ENCODE measurements at regions of chr1 and their contacts with region 1.

Region 1: GRCh38 chr1:23916209-23917131 is 3.3 kb upstream of the CNR2 start:
- DNase-seq: peak; percentile 86
- ATAC-seq: peak; percentile 53
- H3K4me3 ChIP-seq: peak overlapping the region in 2 of 5 experiments; percentile 22 to 50
- H3K4me3 Mint-ChIP-seq: peak overlapping the region; percentile 47
- H3K27ac ChIP-seq: peak overlapping the region; percentile 48 to 77
- H3K27ac Mint-ChIP-seq: peak overlapping the region; percentile 90
- H3K4me1 ChIP-seq: peaks cover 52 to 72% of the 10 kb centered on the region in 2 donors
- H3K4me1 Mint-ChIP-seq: peaks cover 64% of the 10 kb centered on the region
- H3K27me3 ChIP-seq: no peaks in the 10 kb centered on the region
- H3K27me3 Mint-ChIP-seq: no peaks in the 10 kb centered on the region
- CTCF ChIP-seq: peak; percentile 80

Region 2: GRCh38 chr1:23559136-23559984 is 357.1 kb before region 1 on chr1 and contains the start of gene ID3:
- CTCF ChIA-PET with region 1: interaction called, 3 read pairs
- POLR2A ChIA-PET with region 1: no interaction called
- intact Hi-C with region 1: loop called (anchors 5 kb)
- DNase-seq: peak; percentile 97
- ATAC-seq: peak; percentile 73
- H3K4me3 ChIP-seq: peak within 1 kb of the TSS; percentile 87 to 100 (median 95)
- H3K4me3 Mint-ChIP-seq: peak within 1 kb of the TSS; percentile 93
- H3K27ac ChIP-seq: peak within 1 kb of the TSS; percentile 83 to 91
- H3K27ac Mint-ChIP-seq: peak within 1 kb of the TSS; percentile 94
- H3K4me1 ChIP-seq: peaks cover 66 to 75% of the 10 kb centered on the region in 2 donors
- H3K4me1 Mint-ChIP-seq: peaks cover 72% of the 10 kb centered on the region
- H3K27me3 ChIP-seq: no peaks in the 10 kb centered on the region
- H3K27me3 Mint-ChIP-seq: no peaks in the 10 kb centered on the region
- CTCF ChIP-seq: no peak
- total RNA-seq, gene ID3: 367 and 370 TPM in 2 replicates

Region 3: DNA sequence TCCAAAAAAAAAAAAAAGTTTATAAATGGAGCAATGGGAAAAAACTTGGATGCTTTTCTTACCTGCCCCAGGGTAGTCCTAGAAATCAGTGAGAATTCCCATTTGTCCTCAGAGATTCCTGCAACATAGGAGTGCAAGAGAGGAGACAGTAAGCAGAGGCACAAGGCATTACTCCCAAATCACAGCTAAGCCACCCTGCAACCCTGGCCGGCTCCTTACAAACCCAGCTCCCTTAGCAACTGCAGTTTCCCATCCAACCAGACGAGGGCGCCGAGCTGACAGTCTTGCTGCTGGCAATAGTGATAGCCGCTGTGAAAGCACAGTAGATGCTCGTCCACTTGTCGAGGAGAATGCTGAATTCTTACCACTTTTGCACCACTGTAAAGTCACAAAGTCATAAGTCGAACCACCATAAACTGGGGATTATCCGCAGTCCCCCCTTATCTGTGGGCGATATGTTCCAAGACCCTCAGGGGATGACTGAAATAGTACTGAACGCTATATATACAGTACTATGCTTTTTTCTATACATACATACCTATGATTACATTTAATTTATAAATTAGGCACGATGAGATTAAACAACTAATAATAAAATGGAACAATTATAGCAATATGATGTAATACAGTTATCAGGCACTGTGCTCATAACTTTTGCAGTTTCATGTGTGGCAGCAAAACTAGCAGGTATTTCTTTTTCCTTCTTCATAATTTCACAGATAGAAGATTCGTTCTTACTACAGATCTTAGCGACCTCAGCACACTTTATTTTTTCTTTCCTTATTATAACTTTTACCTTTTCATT is 144.2 kb before region 1 on chr1:
- CTCF ChIA-PET with region 1: interaction called, 79 read pairs
- POLR2A ChIA-PET with region 1: interaction called, 6 read pairs
- intact Hi-C with region 1: loop called (anchors 1 kb)
- DNase-seq: peak; percentile 86
- ATAC-seq: peak; percentile 100
- H3K4me3 ChIP-seq: no peak overlapping the region
- H3K4me3 Mint-ChIP-seq: no peak overlapping the region
- H3K27ac ChIP-seq: no peak overlapping the region
- H3K27ac Mint-ChIP-seq: no peak overlapping the region
- H3K4me1 ChIP-seq: peaks cover 4 to 5% of the 10 kb centered on the region in 2 donors
- H3K4me1 Mint-ChIP-seq: peaks cover 9% of the 10 kb centered on the region
- H3K27me3 ChIP-seq: no peaks in the 10 kb centered on the region
- H3K27me3 Mint-ChIP-seq: no peaks in the 10 kb centered on the region
- CTCF ChIP-seq: peak; percentile 92

Region 4: DNA sequence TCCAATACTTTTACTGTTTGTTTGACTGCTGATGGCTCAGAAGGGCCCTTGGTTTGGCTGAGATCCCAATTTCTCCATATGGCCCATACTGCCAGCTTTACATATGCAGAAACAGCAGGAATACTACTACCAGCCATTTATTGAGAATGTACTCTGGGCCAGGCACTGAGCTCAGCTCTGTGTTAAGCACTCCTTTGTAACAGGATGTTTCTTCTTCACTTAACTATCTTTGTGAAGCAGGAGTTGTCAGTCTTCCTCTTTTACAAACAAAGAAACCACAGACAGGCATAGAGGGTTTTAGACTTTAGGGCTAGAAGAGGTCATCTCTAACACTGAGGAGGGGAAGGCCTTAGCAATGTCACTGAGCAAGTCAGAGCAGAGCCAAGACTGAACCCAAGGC is 99.6 kb before region 1 on chr1:
- CTCF ChIA-PET with region 1: interaction called, 199 read pairs
- POLR2A ChIA-PET with region 1: interaction called, 9 read pairs
- intact Hi-C with region 1: no loop called
- DNase-seq: no peak
- ATAC-seq: no peak
- H3K4me3 ChIP-seq: no peak overlapping the region
- H3K4me3 Mint-ChIP-seq: no peak overlapping the region
- H3K27ac ChIP-seq: no peak overlapping the region
- H3K27ac Mint-ChIP-seq: no peak overlapping the region
- H3K4me1 ChIP-seq: no peaks in the 10 kb centered on the region
- H3K4me1 Mint-ChIP-seq: peaks cover 2% of the 10 kb centered on the region
- H3K27me3 ChIP-seq: no peaks in the 10 kb centered on the region
- H3K27me3 Mint-ChIP-seq: no peaks in the 10 kb centered on the region
- CTCF ChIP-seq: no peak

Region 5: DNA sequence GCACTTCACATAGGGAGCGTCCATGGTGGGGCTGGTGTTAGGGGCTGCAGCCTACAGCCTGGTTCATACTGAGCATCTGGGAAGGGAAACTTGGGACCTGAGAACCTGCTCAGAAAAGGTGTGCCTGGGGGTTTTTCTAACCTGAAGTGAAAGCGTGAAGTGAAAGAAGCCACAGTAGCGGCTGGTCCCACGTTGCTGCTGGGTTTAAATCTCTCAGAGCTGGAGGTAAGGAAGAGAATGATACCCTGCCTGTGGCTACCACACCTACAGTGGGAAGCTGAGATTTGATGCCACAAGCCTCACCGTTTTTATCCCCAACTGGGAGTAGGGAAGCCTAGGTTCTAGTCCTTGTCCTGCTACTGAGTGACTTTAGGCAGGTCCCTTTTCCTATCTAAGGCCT is 27.4 kb before region 1 on chr1:
- CTCF ChIA-PET with region 1: interaction called, 22 read pairs
- POLR2A ChIA-PET with region 1: interaction called, 81 read pairs
- intact Hi-C with region 1: no loop called
- DNase-seq: peak; percentile 78
- ATAC-seq: peak; percentile 62
- H3K4me3 ChIP-seq: peak overlapping the region in 1 of 5 experiments; percentile 60
- H3K4me3 Mint-ChIP-seq: peak overlapping the region; percentile 81
- H3K27ac ChIP-seq: peak overlapping the region; percentile 70 to 82
- H3K27ac Mint-ChIP-seq: peak overlapping the region; percentile 88
- H3K4me1 ChIP-seq: peaks cover 68 to 74% of the 10 kb centered on the region in 2 donors
- H3K4me1 Mint-ChIP-seq: peaks cover 72% of the 10 kb centered on the region
- H3K27me3 ChIP-seq: no peaks in the 10 kb centered on the region
- H3K27me3 Mint-ChIP-seq: no peaks in the 10 kb centered on the region
- CTCF ChIP-seq: no peak

Region 6: GRCh38 chr1:23930861-23931490 is 14.5 kb after region 1 on chr1:
- CTCF ChIA-PET with region 1: interaction called, 55 read pairs
- POLR2A ChIA-PET with region 1: interaction called, 18 read pairs
- intact Hi-C with region 1: loop called (anchors 1 kb)
- DNase-seq: peak; percentile 65
- ATAC-seq: peak; percentile 83
- H3K4me3 ChIP-seq: peak overlapping the region in 4 of 5 experiments; percentile 2 to 60 (median 28)
- H3K4me3 Mint-ChIP-seq: peak overlapping the region; percentile 85
- H3K27ac ChIP-seq: peak overlapping the region; percentile 46 to 76
- H3K27ac Mint-ChIP-seq: peak overlapping the region; percentile 98
- H3K4me1 ChIP-seq: peaks cover 22 to 37% of the 10 kb centered on the region in 2 donors
- H3K4me1 Mint-ChIP-seq: peaks cover 38% of the 10 kb centered on the region
- H3K27me3 ChIP-seq: no peaks in the 10 kb centered on the region
- H3K27me3 Mint-ChIP-seq: no peaks in the 10 kb centered on the region
- CTCF ChIP-seq: no peak

Region 7: DNA sequence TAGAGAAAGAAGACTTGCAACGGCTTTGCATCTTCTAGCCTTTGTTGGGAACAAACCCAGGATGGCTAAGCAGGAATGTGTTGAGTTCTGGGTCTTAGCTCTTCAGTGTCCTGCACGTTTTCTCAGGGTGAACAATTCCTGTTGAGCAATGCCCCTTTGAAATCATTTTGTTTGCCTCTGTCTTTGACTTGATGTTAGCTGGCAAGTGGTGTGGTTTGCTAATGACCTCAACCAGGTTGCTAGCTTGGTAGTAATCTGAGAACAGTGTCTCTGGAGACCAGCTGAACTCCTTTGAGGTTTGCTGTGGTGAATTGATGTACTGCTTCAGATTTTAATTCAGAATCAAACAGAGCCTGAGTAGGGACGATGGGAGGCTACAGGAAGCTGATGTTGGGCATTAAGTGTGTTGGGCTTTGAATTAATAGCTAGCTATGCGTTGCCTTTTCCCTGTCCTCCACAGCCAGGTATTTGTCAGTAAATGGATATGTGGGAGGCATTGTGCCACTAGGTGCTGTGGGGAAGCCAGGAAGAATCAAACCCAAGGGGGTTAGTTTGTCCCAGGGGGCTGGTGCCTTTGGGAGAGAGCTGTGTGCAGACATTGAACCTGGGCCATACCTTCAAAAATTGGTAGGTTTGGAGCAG is 87.0 kb after region 1 on chr1:
- CTCF ChIA-PET with region 1: no interaction called
- POLR2A ChIA-PET with region 1: no interaction called
- intact Hi-C with region 1: no loop called
- DNase-seq: no peak
- ATAC-seq: peak; percentile 70
- H3K4me3 ChIP-seq: no peak overlapping the region
- H3K4me3 Mint-ChIP-seq: no peak overlapping the region
- H3K27ac ChIP-seq: no peak overlapping the region
- H3K27ac Mint-ChIP-seq: no peak overlapping the region
- H3K4me1 ChIP-seq: no peaks in the 10 kb centered on the region
- H3K4me1 Mint-ChIP-seq: peaks cover 10% of the 10 kb centered on the region
- H3K27me3 ChIP-seq: no peaks in the 10 kb centered on the region
- H3K27me3 Mint-ChIP-seq: peaks cover 6% of the 10 kb centered on the region
- CTCF ChIP-seq: no peak

Measured in B cell (primary cell).